Activated CD4-positive, alpha-beta T cell treated with anti-CD3 and anti-CD28 coated beads for 36 hours (primary cell): ENCODE measurements at regions of chr6 and their contacts with region 1.

Region 1: DNA sequence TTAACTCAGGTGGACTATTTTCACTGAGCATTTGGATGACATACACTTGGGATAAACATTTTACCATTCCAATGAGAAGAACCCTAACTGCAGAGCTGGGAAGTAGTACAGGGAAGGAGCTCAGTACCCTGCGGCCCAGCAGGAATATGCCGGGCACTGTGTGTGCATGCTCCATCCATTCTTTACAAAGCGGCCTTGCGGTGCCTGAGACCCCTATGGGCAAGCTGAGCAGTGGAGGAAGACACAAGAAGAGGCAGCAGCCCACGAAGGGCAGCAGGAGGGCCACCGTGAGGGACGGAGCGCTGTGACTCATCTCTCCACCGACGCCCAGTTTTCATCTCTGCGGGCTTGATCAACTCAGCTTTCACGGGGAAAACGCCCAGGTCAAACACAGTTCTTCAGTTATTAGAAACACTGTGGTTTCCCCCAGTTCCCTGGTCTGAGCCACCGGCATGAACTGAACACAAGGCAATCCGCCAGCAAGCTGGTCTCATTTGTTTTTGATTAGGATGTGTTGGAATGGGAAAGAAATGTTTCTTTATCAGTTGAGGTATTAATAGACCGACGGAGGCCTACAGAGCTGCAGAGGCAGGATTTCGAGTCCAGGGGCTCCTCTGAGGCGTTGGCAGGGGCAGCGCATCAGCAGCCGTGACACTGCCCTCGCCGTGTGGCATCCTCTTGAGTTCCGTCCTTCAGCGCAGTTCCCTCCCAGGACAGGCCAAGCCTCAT is 44.9 kb downstream of the IRF4 start:
- DNase-seq: no peak
- ATAC-seq: no peak
- H3K4me3 Mint-ChIP-seq: no peak overlapping the region
- H3K27ac Mint-ChIP-seq: no peak overlapping the region
- H3K4me1 Mint-ChIP-seq: peaks cover 43% of the 10 kb centered on the region
- H3K27me3 Mint-ChIP-seq: no peaks in the 10 kb centered on the region

Region 2: GRCh38 chr6:203661-204060 is 232.8 kb before region 1 on chr6:
- CTCF ChIA-PET with region 1: no interaction called
- POLR2A ChIA-PET with region 1: no interaction called
- intact Hi-C with region 1: no loop called
- DNase-seq: no peak
- ATAC-seq: no peak
- H3K4me3 Mint-ChIP-seq: no peak overlapping the region
- H3K27ac Mint-ChIP-seq: no peak overlapping the region
- H3K4me1 Mint-ChIP-seq: peaks cover 7% of the 10 kb centered on the region
- H3K27me3 Mint-ChIP-seq: peaks cover 16% of the 10 kb centered on the region

Region 3: DNA sequence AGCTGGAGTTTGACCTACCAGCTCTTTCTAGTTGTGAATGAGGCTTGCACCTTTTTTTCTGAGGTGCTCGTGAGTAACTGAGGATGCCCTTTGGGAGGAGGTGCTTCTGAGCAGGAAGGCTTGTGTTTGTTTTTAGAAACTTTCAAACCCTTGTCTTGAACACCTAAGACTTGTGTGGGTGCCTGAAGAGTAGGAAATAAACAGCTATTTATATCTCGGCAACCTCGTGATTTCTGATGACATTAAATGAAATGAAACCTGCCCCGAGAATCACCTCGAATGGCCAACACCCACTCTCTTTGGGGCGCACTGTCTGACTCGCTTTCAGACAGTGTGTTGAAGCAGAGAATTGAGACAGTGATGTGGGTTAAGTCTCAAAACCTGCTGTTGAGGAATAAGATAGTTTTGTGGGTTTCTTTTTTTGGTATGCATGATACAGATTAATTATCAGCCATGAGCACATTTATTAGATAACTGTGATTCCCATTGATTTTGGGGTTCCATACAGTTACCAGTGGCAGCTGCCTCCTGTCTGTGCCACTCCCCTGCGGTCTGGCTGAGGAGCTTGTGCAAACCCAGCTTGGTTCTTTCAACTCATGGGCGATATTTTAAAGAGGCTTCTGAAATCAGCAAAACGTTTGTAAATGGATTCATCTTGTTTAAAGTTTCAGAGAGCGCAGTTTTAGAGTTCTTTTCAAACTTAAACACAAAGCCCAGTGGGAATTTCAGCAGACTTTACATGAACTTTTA is 36.5 kb before region 1 on chr6:
- CTCF ChIA-PET with region 1: interaction called, 8 read pairs
- POLR2A ChIA-PET with region 1: interaction called, 11 read pairs
- intact Hi-C with region 1: loop called in 1 of 2 experiments (anchors 1 kb)
- DNase-seq: peak; percentile 78
- ATAC-seq: peak; percentile 28
- H3K4me3 Mint-ChIP-seq: peak overlapping the region; percentile 68
- H3K27ac Mint-ChIP-seq: peak overlapping the region; percentile 88
- H3K4me1 Mint-ChIP-seq: peaks cover 91% of the 10 kb centered on the region
- H3K27me3 Mint-ChIP-seq: no peaks in the 10 kb centered on the region

Region 4: DNA sequence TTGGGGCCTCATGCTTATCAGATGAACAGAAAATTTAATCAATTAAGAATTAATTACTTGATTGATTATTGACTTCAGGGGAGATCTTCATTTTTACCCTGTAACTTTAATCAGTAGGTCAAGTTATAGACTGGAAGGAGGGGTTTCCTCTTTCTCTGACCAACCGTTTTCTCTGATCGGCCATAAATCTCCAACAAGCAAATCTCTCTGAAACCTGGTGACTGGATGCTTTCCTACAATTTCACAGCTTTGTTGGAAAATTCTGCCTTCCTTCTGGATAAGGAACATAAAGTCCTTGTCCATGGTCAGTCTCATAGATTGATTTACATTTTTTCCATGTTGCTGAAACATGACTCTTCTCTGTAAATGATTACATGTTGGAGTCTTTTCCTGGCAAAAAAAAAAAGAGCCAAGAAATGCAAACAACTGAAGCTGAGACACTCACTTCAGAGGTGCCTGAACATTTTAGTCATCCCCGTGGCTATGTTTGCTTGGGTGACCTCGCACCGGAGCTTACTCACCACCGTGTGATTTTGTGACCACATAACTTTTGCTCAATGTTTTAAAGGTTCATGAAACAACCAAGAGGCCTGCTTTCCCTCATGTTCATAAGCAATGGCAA is 13.9 kb before region 1 on chr6:
- CTCF ChIA-PET with region 1: interaction called, 7 read pairs
- POLR2A ChIA-PET with region 1: interaction called, 11 read pairs
- intact Hi-C with region 1: loop called in 1 of 2 experiments (anchors 1 kb)
- DNase-seq: peak; percentile 87
- ATAC-seq: peak; percentile 99
- H3K4me3 Mint-ChIP-seq: no peak overlapping the region
- H3K27ac Mint-ChIP-seq: peak overlapping the region; percentile 63
- H3K4me1 Mint-ChIP-seq: peaks cover 31% of the 10 kb centered on the region
- H3K27me3 Mint-ChIP-seq: no peaks in the 10 kb centered on the region

Region 5: DNA sequence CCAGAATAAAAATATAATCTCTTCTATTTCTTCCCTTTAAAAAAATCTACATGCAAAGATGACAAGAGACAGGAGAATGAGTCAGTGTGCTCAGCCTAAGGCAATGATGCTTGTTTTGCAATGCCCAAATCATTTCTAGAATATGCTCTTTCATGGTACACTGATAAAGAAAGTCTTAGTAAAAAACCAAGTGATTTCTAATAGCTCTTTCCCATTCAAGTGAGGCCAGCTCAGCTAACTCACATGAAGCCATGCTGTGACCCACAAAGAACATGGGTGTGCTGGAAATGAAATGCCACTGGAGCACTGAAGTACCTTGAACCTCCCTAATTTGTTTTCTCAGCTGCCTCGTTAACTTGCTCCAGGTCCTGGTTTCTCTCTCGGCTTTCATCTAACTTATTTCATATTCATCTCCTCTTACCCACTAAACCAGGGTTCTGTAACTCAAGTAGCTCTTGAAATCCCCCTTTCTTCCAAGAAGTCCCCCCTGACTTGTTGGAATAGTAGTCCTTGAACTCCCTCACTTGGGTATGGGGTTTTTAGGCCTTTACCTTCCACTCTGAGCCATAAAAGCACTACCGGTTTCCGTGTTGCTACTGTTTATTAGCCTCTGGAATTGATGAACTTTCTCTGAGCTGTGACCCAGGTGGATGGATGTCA is 47.7 kb after region 1 on chr6:
- CTCF ChIA-PET with region 1: interaction called, 4 read pairs
- POLR2A ChIA-PET with region 1: interaction called, 11 read pairs
- intact Hi-C with region 1: loop called in 1 of 2 experiments (anchors 1 kb)
- DNase-seq: peak; percentile 73
- ATAC-seq: peak; percentile 92
- H3K4me3 Mint-ChIP-seq: peak overlapping the region; percentile 58
- H3K27ac Mint-ChIP-seq: peak overlapping the region; percentile 100
- H3K4me1 Mint-ChIP-seq: peaks cover 88% of the 10 kb centered on the region
- H3K27me3 Mint-ChIP-seq: no peaks in the 10 kb centered on the region

Region 6: DNA sequence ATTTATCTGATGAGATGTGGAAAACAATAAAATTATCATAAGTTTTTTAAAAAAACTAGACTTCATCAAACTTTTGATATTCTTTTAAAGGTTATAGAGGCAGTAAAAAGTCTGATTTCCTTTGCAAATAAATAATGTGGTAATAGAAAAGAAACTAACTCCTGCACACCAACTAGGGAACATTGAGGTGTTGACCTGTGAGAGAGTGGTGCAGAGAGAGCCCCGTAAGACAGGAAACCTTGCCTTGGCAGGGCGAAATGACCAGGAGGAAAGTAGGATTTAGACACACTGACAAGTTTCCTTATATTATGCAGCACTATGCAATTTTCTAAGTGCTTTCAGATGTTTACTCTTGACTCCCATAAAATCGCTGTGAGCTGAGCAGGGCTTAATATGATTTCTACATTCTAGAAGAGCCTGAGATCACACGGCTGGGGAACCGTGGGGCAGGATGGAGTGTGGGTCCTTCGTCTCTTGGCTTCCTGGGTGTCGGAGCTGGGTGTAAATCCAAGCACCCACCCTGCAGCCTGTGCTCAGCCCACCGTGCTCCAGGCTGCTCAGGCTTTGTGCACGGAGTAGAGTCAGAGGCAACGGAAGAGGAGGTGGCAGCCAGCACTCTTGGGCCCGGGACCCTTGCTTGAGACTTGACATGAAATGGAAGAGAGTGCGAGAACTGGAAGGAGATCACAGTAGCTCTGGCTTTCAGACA is 814.2 kb after region 1 on chr6:
- CTCF ChIA-PET with region 1: no interaction called
- POLR2A ChIA-PET with region 1: no interaction called
- intact Hi-C with region 1: no loop called
- DNase-seq: no peak
- ATAC-seq: no peak
- H3K4me3 Mint-ChIP-seq: no peak overlapping the region
- H3K27ac Mint-ChIP-seq: no peak overlapping the region
- H3K4me1 Mint-ChIP-seq: no peaks in the 10 kb centered on the region
- H3K27me3 Mint-ChIP-seq: peaks cover 4% of the 10 kb centered on the region